ENCODE measurements at regions of chr11 and their contacts with region 1.

Region 1: GRCh38 chr11:44899959-44900358 is 50.7 kb downstream of the TP53I11 start:
- DNase-seq: peak in 2 of 3 donors; percentile 32 to 48
- ATAC-seq: peak; percentile 42 to 64
- H3K4me3 ChIP-seq: no peak overlapping the region
- H3K27ac ChIP-seq: no peak overlapping the region
- H3K4me1 ChIP-seq: no peaks in the 10 kb centered on the region
- H3K27me3 ChIP-seq: no peaks in the 10 kb centered on the region

Region 2: GRCh38 chr11:44627911-44628729 is 271.8 kb before region 1 on chr11:
- intact Hi-C with region 1: loop called in 1 of 4 experiments (anchors 5 kb)
- DNase-seq: peak; percentile 84 to 93 (median 93)
- ATAC-seq: peak; percentile 83 to 91
- H3K4me3 ChIP-seq: no peak overlapping the region
- H3K27ac ChIP-seq: peak overlapping the region; percentile 77
- H3K4me1 ChIP-seq: peaks cover 18% of the 10 kb centered on the region
- H3K27me3 ChIP-seq: no peaks in the 10 kb centered on the region

Region 3: GRCh38 chr11:44718612-44719390 is 181.2 kb before region 1 on chr11:
- intact Hi-C with region 1: loop called in 1 of 4 experiments (anchors 5 kb)
- DNase-seq: no peak
- ATAC-seq: peak in 1 of 2 donors; percentile 29
- H3K4me3 ChIP-seq: no peak overlapping the region
- H3K27ac ChIP-seq: no peak overlapping the region
- H3K4me1 ChIP-seq: no peaks in the 10 kb centered on the region
- H3K27me3 ChIP-seq: no peaks in the 10 kb centered on the region

Region 4: GRCh38 chr11:45233121-45233803 is 333.3 kb after region 1 on chr11:
- intact Hi-C with region 1: no loop called
- DNase-seq: peak; percentile 77 to 90 (median 88)
- ATAC-seq: peak; percentile 80 to 84
- H3K4me3 ChIP-seq: no peak overlapping the region
- H3K27ac ChIP-seq: no peak overlapping the region
- H3K4me1 ChIP-seq: no peaks in the 10 kb centered on the region
- H3K27me3 ChIP-seq: no peaks in the 10 kb centered on the region